Panc1 (cell line): ENCODE measurements at regions of chr2 and their contacts with region 1.

Region 1: DNA sequence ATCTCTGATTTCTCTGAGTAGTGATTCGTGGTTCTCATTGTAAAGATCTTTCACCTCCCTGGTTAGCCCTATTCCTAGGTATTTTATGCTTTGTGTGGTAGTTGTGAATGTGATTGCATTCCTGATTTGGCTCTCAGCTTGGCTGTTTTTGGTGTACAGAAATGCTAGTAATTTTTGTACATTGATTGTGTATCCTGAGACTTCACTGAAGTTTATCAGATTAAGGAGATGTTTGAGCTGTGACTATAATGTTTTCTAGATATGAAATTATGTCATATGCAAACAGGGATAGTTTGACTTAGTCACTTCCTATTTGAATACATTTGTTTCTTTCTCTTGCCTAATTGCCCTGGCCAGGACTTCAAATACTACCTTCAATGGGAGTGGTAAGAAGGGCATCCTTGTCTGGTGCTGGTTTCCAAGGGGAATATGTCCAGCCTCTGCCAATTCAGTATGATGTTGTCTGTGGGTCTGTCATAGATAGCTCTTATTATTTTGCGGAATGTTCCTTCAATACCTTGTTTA is 251.9 kb upstream of the ZNF804A start:
- DNase-seq: no peak
- ATAC-seq: no peak
- H3K4me3 ChIP-seq: no peak overlapping the region
- H3K27ac ChIP-seq: no peak overlapping the region
- H3K4me1 ChIP-seq: no peaks in the 10 kb centered on the region
- H3K27me3 ChIP-seq: no peaks in the 10 kb centered on the region
- CTCF ChIP-seq: no peak

Region 2: DNA sequence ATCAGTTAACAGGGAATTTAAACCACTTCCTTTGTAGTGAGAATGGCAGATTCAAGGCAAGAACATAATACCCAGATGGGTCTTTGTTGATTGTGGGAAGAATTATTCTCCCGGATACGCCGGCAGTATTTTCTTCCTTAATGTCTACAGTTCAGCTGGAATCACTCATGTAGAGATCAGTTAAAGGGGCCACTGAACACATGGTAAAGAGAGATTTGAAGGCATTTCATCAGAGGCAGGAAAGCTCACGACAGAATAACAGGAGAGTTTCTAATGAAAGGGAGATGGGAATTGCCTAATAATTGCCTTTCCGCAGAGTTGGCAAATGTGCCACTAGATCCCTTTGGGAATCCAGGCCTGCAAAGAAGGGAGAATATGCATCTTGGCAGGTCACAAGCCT is 75.7 kb before region 1 on chr2:
- CTCF ChIA-PET with region 1: no interaction called
- POLR2A ChIA-PET with region 1: no interaction called
- in situ Hi-C with region 1: no loop called
- intact Hi-C with region 1: no loop called
- DNase-seq: no peak
- ATAC-seq: no peak
- H3K4me3 ChIP-seq: no peak overlapping the region
- H3K27ac ChIP-seq: no peak overlapping the region
- H3K4me1 ChIP-seq: no peaks in the 10 kb centered on the region
- H3K27me3 ChIP-seq: no peaks in the 10 kb centered on the region
- CTCF ChIP-seq: no peak

Region 3: GRCh38 chr2:184646177-184646576 is 299.8 kb after region 1 on chr2:
- CTCF ChIA-PET with region 1: no interaction called
- POLR2A ChIA-PET with region 1: interaction called, 12 read pairs
- in situ Hi-C with region 1: no loop called
- intact Hi-C with region 1: no loop called
- DNase-seq: no peak
- ATAC-seq: no peak
- H3K4me3 ChIP-seq: no peak overlapping the region
- H3K27ac ChIP-seq: no peak overlapping the region
- H3K4me1 ChIP-seq: no peaks in the 10 kb centered on the region
- H3K27me3 ChIP-seq: no peaks in the 10 kb centered on the region
- CTCF ChIP-seq: no peak